AG04449 (cell line): ENCODE measurements at regions of chr14 and their contacts with region 1.

Region 1: GRCh38 chr14:59189786-59190771 is 1.6 kb downstream of the DAAM1 start:
- DNase-seq: peak; percentile 45
- H3K4me3 ChIP-seq: peak overlapping the region; percentile 94
- CTCF ChIP-seq: no peak

Region 2: DNA sequence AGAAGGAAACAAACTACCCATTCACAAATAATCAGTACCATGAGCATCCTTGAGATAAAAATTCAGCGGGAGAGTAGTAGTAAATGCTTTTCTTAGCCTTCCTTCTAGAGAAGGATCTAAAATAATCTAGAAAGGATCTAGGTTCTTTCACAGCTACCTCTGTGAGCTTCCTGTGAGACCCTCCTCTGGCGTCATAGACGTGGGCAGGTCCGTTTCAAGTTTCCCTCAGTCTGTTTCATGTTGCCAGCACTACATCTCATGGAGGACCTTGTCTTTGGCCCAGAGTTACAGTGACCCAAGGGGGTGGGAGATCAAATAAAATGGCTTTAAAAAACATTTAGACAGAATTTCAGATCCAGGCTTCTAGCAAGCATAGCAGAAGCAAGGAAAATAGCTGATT is 12.0 kb after region 1 on chr14:
- CTCF ChIA-PET with region 1: interaction called, 10 read pairs
- POLR2A ChIA-PET with region 1: no interaction called
- DNase-seq: no peak
- H3K4me3 ChIP-seq: no peak overlapping the region
- CTCF ChIP-seq: no peak